Right ventricle myocardium inferior (tissue), 1 donor: ENCODE measurements at regions of chr3 and their contacts with region 1.

Region 1: DNA sequence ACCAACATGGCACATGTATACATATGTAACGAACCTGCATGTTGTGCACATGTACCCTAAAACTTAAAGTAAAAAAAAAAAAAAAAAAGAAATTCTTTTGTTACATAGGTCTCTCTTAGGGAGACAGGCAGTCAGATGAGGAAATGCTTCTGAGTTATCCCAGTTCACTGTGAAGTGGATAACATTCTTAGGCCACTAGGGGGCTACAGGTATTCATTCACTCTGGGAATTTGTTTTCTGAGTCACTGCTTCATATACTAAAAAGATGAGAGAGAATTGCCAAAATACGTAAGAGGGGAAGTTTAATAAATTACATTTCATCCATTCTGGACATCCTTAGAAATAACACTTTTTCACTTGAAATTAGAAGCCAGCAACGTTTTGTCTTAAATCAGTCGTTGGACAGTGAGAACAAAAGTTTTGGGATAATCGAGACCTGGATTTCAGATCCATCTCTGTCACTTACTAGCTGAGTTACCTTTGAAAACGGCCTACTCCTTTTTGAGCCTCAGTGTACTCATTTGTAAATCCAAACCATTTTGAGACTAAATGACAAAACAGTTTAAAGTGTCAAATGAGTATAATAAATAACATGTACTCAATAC is 738.4 kb upstream of the ALCAM start:
- DNase-seq: no peak
- ATAC-seq: no peak

Region 2: DNA sequence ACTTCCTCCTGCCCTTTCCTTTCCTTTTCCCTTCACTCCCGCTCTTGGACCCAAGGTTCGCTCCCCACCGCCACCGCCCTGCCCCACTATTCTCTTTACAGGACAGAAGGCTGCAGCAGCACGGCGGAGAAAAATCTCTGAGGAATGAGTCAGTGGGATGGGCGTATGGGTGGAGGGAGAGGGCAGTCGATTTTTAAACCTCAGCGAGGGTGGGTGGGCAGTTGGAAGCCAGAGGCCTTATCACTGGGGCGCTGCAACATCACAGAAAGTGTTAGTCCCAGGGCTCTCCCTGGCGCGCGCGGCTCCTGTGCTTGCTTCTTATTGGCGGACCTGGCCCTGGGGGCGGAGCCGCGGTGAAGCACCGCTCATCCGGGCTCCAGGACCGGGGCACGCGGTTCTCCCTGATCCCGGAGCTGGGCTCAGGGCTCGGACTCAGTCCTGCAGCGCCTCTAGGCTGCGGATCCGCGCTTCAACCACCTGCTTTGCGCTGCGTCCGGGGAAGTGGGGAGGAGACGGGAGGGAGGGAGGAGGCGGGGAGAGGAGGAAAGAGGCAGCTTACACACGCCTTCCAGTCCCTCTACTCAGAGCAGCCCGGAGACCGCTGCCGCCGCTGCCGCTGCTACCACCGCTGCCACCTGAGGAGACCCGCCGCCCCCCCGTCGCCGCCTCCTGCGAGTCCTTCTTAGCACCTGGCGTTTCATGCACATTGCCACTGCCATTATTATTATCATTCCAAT is 738.2 kb after region 1 on chr3 and contains the start of gene ALCAM:
- intact Hi-C with region 1: loop called (anchors 5 kb)
- DNase-seq: peak; percentile 96
- ATAC-seq: peak; percentile 97
- total RNA-seq, gene ALCAM: 3.5 TPM

Region 3: DNA sequence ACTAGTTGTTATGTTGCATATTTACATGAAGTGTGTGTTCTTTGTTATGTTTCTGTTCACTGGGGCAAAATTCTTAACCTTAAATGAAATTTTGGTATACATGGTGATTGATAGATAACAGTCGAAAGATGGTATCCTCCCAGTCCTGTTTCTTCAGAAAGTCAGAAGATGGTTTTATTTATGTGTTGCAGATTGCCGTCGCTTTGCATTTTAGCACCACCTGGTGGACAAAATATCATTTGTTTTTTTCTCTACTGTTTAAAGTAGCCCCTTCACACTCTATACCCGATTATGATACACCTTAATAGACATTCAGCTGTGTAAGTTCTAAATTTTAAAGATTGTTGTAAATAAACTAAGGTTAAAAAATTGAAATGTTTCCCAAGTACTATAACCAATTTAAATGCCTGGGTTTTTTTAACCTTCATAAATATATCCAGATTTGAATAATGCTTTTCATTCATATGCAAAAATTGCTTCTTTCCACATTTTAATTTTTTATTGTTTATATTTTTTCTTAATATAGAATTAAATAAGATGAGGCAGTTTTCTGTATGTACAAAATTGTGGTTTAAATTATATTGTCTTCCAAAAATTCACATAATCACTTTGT is 890.6 kb after region 1 on chr3:
- intact Hi-C with region 1: loop called (anchors 10 kb)
- DNase-seq: no peak
- ATAC-seq: no peak